HEK293T (cell line): ENCODE measurements at regions of chr5 and their contacts with region 1.

Region 1: DNA sequence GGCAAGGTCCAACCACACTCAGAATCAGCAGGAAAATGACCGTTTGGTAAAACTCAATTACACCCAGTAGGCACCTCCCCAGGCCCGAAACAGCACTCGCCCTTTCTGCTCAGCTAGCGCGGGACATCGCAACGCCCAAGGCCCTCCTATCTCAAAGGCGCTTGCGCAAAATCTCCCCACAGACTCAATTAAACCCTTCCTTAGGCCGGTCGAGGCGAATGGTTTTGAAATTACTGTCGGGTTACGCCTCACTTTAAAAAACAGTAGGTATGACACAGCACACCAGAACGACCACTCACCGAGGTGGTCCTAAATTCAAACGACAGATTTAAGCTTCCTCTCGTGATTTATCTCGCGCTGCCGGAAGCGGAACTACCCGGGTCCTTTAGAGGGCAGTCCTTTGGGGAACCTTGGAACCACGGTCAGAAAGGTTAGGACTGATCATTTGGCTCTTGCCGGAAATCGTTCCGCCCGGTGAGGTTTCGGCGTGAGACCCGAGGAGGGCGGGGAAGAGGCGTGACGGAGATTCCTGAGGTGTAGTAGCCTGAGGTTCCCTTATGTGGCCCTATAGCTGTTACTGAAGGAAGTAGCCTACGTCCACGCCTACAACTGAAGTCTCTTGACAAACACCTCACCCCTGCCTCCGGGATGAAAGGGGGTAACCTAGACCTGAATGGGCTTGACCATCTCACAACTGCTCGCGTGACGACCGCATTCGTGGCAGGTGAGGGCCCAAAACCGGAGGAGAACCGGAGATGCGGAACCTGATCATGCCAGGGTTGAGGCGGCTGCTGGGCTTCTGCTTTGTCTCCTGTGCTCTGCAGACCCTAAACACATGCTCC is at the starts of genes GIN1 and PPIP5K2:
- DNase-seq: peak; percentile 84

Region 2: DNA sequence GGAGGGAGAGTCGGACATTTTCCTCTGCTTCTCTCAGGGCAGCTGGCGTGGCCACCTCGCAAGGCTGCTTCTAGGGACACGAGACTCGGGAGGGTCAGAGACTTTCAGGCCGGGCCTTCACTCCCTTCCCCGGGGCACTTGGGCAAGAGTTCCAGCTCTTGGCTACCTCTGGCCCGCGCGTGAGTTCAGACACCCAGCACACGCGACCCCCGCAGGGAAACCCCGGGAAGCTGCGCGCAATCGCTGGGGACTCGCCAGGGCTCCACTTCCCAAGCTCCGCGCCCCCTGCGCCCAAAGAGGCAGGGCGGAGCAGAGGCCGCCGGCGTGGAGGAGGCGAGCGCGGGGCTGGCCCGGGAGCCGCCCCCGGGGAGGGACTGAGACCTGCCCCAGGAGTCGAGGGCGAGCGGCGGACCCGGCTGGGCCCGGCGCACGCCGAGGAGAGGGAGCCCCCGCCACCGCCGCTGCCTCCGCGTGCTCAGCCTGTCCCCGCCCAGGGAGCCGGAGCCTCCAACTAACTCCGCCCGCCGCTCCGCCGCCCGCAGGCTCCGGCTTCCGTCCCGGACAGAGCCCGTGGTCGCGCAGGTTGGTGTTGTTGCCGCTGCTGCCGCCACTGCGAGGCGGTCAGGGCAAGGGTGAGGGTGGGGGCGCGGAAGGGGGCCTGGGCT is 365.1 kb before region 1 on chr5 and contains the start of gene PAM:
- CTCF ChIA-PET with region 1: no interaction called
- POLR2A ChIA-PET with region 1: interaction called, 22 read pairs
- DNase-seq: peak; percentile 75

Region 3: DNA sequence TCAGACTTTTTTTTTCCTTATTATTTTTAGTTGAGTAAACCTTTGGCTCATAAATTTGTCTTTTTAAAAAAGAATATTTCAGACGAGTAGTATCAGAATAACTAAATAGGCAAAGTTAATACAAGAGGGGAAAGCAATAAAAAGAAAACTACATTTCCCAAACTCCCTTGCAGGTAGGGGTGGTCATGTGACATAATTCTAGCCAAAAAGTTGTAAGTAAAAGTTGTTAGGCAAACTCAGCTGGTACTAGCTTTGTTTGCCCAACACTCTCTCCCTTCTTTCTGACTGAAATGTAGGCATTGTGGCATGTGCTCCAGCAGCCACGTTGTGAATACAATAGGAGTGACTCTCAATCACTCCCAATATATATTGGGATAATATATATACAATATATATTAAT is 21.0 kb before region 1 on chr5:
- CTCF ChIA-PET with region 1: no interaction called
- POLR2A ChIA-PET with region 1: interaction called, 10 read pairs
- DNase-seq: no peak

Region 4: GRCh38 chr5:103258368-103258956 is 138.5 kb after region 1 on chr5 and contains the start of gene MACIR:
- CTCF ChIA-PET with region 1: no interaction called
- POLR2A ChIA-PET with region 1: interaction called, 12 read pairs
- DNase-seq: peak; percentile 92